HEK293 (cell line): ENCODE measurements at regions of chr11 and their contacts with region 1.

Region 1: GRCh38 chr11:8099291-8099899 is 18.4 kb downstream of the TUB start:
- H3K4me3 ChIP-seq: no peak overlapping the region
- H3K27ac ChIP-seq: no peak overlapping the region
- H3K4me1 ChIP-seq: no peaks in the 10 kb centered on the region
- CTCF ChIP-seq: no peak; the same call in 1 of the 2 replicates

Region 2: DNA sequence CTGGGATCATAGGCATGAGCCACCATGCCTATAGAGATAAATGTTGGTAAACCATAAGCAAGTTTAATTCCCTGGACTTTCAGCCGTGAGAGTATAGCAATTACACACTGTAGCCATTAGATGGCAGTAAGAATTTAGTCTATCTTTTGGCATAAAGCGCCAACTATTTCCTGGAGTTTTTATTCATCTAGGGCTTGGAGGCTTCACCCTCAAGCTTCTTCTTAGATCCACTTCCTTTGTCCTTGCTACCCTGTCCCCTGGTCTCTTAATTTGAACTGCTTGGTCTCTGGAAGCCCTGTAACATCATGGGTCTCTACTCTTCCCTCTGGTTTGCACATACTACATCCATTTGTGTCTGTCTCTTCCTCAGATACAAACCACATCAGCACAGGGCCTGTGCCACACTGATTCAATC is 206.5 kb before region 1 on chr11:
- CTCF ChIA-PET with region 1: interaction called, 19 read pairs
- POLR2A ChIA-PET with region 1: no interaction called
- H3K4me3 ChIP-seq: no peak overlapping the region
- H3K27ac ChIP-seq: no peak overlapping the region
- H3K4me1 ChIP-seq: no peaks in the 10 kb centered on the region
- CTCF ChIP-seq: no peak

Region 3: DNA sequence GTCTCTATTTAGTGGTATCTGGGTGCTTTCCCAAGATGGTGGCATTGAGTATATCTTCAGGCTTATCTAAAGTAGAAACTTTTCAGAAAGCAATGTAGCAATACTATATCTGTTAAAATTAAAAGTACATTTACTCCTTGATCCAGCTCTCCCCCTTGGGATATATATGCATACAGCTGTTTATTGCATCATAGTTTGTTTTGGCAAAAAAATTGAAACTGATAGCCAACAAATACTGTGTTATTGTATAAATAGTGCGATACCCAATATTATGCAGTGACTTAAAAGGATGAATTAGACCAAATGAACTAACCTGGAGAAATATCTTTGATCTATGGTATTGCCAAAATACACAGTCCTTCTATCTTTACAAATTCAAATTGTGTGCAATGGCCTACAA is 149.5 kb before region 1 on chr11:
- CTCF ChIA-PET with region 1: no interaction called
- POLR2A ChIA-PET with region 1: no interaction called
- H3K4me3 ChIP-seq: no peak overlapping the region
- H3K27ac ChIP-seq: no peak overlapping the region
- H3K4me1 ChIP-seq: no peaks in the 10 kb centered on the region
- CTCF ChIP-seq: no peak

Region 4: DNA sequence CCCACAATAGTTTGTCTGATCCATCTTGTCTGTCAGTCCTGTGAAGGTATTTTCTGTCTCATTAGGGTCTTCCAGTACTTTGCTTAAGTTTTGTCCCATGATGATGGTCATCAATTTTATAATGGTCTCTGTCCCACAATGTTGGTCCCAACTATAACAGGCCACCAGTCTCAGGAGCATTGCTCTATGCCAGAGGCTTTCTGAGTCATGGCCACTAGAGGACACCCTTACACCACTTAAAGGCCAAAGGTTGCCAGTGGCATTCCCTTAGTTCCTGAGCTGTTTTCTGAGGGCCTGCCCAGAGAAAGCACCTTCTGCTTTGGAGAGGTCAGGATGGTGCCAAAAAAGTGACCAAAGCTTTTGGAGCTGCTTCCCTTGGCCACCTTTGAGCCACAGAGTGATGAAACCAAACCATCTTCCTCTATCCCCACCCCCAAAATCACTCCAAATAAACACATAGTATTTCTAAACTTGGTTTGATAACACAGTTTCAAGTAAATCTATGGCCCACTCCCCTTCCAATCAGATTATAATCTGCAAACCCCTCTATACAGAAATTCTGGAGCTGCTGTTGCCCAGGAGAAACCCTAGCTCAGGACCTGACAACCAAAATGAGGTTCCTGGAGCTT is 92.9 kb before region 1 on chr11:
- CTCF ChIA-PET with region 1: interaction called, 532 read pairs
- POLR2A ChIA-PET with region 1: interaction called, 4 read pairs
- H3K4me3 ChIP-seq: no peak overlapping the region
- H3K27ac ChIP-seq: no peak overlapping the region
- H3K4me1 ChIP-seq: no peaks in the 10 kb centered on the region
- CTCF ChIP-seq: peak; percentile 68

Region 5: GRCh38 chr11:8023831-8024555 is 75.4 kb before region 1 on chr11:
- CTCF ChIA-PET with region 1: interaction called, 374 read pairs
- POLR2A ChIA-PET with region 1: interaction called, 5 read pairs
- H3K4me3 ChIP-seq: no peak overlapping the region
- H3K27ac ChIP-seq: no peak overlapping the region
- H3K4me1 ChIP-seq: no peaks in the 10 kb centered on the region
- CTCF ChIP-seq: no peak

Region 6: GRCh38 chr11:8070417-8071115 is 28.8 kb before region 1 on chr11:
- CTCF ChIA-PET with region 1: interaction called, 11 read pairs
- POLR2A ChIA-PET with region 1: no interaction called
- H3K4me3 ChIP-seq: no peak overlapping the region
- H3K27ac ChIP-seq: no peak overlapping the region
- H3K4me1 ChIP-seq: peaks cover 8% of the 10 kb centered on the region
- CTCF ChIP-seq: no peak

Region 7: DNA sequence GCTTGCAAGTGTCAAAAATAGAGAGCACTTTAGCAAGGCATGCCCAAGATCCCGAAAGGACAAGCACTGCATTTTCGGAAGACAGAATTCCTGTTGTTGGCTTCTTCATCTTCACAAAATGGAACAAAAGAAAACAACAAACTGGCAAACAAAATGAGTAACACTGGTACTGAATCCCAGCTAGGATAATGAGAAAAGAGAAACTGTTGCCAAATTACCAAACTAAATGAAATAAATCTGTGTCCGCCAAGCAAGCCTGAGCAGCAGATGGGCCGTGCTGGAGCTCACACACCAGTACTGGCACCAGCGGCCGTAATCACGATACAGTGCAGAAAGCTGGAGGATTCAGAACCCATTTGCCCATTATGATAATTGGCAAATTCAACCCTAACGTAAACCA is 12.2 kb after region 1 on chr11:
- CTCF ChIA-PET with region 1: interaction called, 38 read pairs
- POLR2A ChIA-PET with region 1: no interaction called
- H3K4me3 ChIP-seq: no peak overlapping the region
- H3K27ac ChIP-seq: no peak overlapping the region
- H3K4me1 ChIP-seq: no peaks in the 10 kb centered on the region
- CTCF ChIP-seq: no peak

Region 8: DNA sequence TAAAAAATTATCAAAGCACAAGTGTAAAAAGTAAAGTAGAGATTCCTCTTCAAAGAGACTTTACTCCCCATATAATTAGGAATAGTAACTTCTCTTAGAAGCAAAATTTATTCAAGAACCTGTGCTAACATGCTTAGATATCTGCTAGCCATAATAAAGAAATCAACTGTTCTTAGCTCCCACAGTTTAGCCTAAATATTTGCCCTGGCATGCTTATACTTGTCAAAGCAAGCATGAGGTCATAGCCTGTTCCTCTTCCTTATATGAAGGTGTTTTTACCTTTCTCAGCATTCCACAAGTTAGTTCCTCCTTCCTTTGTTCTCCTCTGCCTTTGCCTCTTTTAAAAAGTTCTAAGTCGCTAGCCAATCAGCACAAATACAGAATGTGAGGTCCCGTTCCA is 39.1 kb after region 1 on chr11:
- CTCF ChIA-PET with region 1: no interaction called
- POLR2A ChIA-PET with region 1: no interaction called
- H3K4me3 ChIP-seq: no peak overlapping the region
- H3K27ac ChIP-seq: no peak overlapping the region
- H3K4me1 ChIP-seq: no peaks in the 10 kb centered on the region
- CTCF ChIP-seq: no peak